ENCODE measurements at regions of chr4 and their contacts with region 1.

Region 1: GRCh38 chr4:122151982-122152710 is at the start of gene BLTP1:
- DNase-seq: peak; percentile 93
- ATAC-seq: peak; percentile 91
- H3K4me3 Mint-ChIP-seq: peak within 1 kb of the TSS; percentile 85
- H3K27ac Mint-ChIP-seq: peak within 1 kb of the TSS; percentile 98
- H3K4me1 Mint-ChIP-seq: peaks cover 50% of the 10 kb centered on the region
- H3K27me3 Mint-ChIP-seq: no peaks in the 10 kb centered on the region
- total RNA-seq, gene BLTP1: 16.5 to 20.1 TPM

Region 2: GRCh38 chr4:121800961-121801714 is 351.0 kb before region 1 on chr4 and contains the start of gene EXOSC9:
- CTCF ChIA-PET with region 1: no interaction called
- POLR2A ChIA-PET with region 1: no interaction called
- intact Hi-C with region 1: loop called in 1 of 2 experiments (anchors 1 kb)
- DNase-seq: peak; percentile 95
- ATAC-seq: peak; percentile 85
- H3K4me3 Mint-ChIP-seq: peak within 1 kb of the TSS; percentile 93
- H3K27ac Mint-ChIP-seq: peak within 1 kb of the TSS; percentile 99
- H3K4me1 Mint-ChIP-seq: peaks cover 45% of the 10 kb centered on the region
- H3K27me3 Mint-ChIP-seq: no peaks in the 10 kb centered on the region
- total RNA-seq, gene EXOSC9: 85.4 to 94.5 TPM

Region 3: GRCh38 chr4:121869841-121870656 is 282.1 kb before region 1 on chr4 and contains the start of gene BBS7:
- CTCF ChIA-PET with region 1: no interaction called
- POLR2A ChIA-PET with region 1: no interaction called
- intact Hi-C with region 1: loop called in 1 of 2 experiments (anchors 1 kb)
- DNase-seq: peak; percentile 98
- ATAC-seq: peak; percentile 99
- H3K4me3 Mint-ChIP-seq: peak within 1 kb of the TSS; percentile 91
- H3K27ac Mint-ChIP-seq: peak within 1 kb of the TSS; percentile 83
- H3K4me1 Mint-ChIP-seq: peaks cover 17% of the 10 kb centered on the region
- H3K27me3 Mint-ChIP-seq: peaks cover 6% of the 10 kb centered on the region
- total RNA-seq, gene BBS7: 15.0 to 16.3 TPM

Region 4: DNA sequence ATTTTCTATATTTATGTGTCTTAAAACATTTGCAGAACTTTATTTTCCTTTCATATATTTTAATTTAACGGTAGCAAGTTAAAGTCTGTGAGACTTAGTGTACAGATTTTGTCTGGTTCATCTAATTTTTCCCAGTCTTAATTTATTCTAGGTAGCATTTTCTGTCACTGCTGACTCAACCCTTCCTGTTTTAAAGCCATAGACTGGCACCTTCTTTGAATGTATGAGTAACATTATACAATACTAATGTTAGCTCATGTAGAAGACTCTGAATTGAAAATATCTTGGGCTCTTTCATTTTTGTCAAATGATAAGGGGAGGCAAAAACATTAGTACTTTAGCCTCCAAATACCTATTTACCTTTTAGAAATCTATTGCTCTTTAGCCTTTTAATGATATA is 43.6 kb after region 1 on chr4:
- CTCF ChIA-PET with region 1: interaction called, 3 read pairs
- POLR2A ChIA-PET with region 1: no interaction called
- intact Hi-C with region 1: loop called in 1 of 2 experiments (anchors 5 kb)
- DNase-seq: no peak
- ATAC-seq: peak; percentile 94
- H3K4me3 Mint-ChIP-seq: no peak overlapping the region
- H3K27ac Mint-ChIP-seq: no peak overlapping the region
- H3K4me1 Mint-ChIP-seq: peaks cover 8% of the 10 kb centered on the region
- H3K27me3 Mint-ChIP-seq: no peaks in the 10 kb centered on the region

Region 5: GRCh38 chr4:122542411-122543236 is 390.5 kb after region 1 on chr4:
- CTCF ChIA-PET with region 1: no interaction called
- POLR2A ChIA-PET with region 1: no interaction called
- intact Hi-C with region 1: loop called in 1 of 2 experiments (anchors 10 kb)
- DNase-seq: no peak
- ATAC-seq: peak; percentile 63
- H3K4me3 Mint-ChIP-seq: peak overlapping the region; percentile 53
- H3K27ac Mint-ChIP-seq: peak overlapping the region; percentile 95
- H3K4me1 Mint-ChIP-seq: peaks cover 94% of the 10 kb centered on the region
- H3K27me3 Mint-ChIP-seq: no peaks in the 10 kb centered on the region